Naive thymus-derived CD4-positive, alpha-beta T cell (primary cell): ENCODE measurements at regions of chr17 and their contacts with region 1.

Region 1: DNA sequence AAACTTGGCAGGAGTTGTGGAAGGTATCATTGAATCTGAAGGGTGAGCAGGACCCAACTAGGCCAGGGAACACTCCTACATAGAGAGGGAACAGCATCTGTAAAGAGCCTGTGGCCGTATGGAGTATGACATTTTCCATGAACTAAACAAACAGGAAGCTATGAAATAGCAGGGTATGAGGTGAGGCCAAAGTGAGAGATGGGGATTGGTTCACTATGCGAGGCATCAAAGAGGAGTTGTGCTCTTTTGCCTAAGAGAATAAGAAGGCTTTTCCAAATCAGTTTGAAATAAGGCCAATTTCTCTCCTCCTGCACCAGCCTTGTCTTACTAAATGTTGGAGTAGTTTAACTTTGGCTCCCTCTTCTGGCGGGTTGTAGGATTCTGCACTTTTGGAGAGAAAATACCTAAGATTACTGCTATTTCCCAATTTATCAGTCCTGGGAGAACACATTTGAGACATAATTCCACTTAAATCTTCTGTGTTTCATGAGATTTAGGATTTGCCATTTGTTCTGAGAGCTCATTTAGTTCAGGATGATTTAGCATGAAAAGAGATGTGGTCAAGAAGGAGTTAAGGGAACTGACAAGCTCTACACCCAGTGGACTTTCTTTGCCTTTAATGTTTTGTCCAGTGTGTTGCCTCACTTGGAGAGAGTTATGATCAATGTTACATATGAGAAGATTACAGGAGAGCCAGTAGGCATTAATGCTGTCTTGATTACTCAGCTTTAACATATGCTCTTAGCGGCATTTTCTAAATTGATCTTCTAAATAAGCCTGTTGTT is 55.4 kb downstream of the TNRC6C start:
- DNase-seq: peak in 7 of 9 donors; percentile 39 to 68 (median 61)
- ATAC-seq: peak; percentile 77
- H3K4me3 ChIP-seq: no peak overlapping the region
- H3K4me3 Mint-ChIP-seq: no peak overlapping the region
- H3K27ac ChIP-seq: no peak overlapping the region
- H3K27ac Mint-ChIP-seq: peak overlapping the region in 5 of 9 donors; percentile 3 to 64 (median 18)
- H3K4me1 ChIP-seq: peaks cover 0 to 3% of the 10 kb centered on the region in 2 donors
- H3K4me1 Mint-ChIP-seq: peaks cover 18 to 58% (median 43%) of the 10 kb centered on the region in 7 donors
- H3K27me3 ChIP-seq: no peaks in the 10 kb centered on the region
- H3K27me3 Mint-ChIP-seq: no peaks in the 10 kb centered on the region

Region 2: GRCh38 chr17:77645072-77646045 is 368.5 kb before region 1 on chr17:
- CTCF ChIA-PET with region 1: no interaction called
- POLR2A ChIA-PET with region 1: no interaction called
- intact Hi-C with region 1: loop called in 1 of 2 experiments (anchors 1 kb)
- DNase-seq: peak in 8 of 9 donors; percentile 45 to 74 (median 64)
- ATAC-seq: peak; percentile 84
- H3K4me3 ChIP-seq: peak overlapping the region; percentile 34
- H3K4me3 Mint-ChIP-seq: peak overlapping the region; percentile 63 to 81 (median 74)
- H3K27ac ChIP-seq: peak overlapping the region; percentile 55
- H3K27ac Mint-ChIP-seq: peak overlapping the region; percentile 84 to 94 (median 90)
- H3K4me1 ChIP-seq: peaks cover 13 to 21% of the 10 kb centered on the region in 2 donors
- H3K4me1 Mint-ChIP-seq: peaks cover 0 to 39% (median 31%) of the 10 kb centered on the region in 7 donors
- H3K27me3 ChIP-seq: no peaks in the 10 kb centered on the region
- H3K27me3 Mint-ChIP-seq: peaks cover 0 to 12% (median 0%) of the 10 kb centered on the region in 5 donors

Region 3: DNA sequence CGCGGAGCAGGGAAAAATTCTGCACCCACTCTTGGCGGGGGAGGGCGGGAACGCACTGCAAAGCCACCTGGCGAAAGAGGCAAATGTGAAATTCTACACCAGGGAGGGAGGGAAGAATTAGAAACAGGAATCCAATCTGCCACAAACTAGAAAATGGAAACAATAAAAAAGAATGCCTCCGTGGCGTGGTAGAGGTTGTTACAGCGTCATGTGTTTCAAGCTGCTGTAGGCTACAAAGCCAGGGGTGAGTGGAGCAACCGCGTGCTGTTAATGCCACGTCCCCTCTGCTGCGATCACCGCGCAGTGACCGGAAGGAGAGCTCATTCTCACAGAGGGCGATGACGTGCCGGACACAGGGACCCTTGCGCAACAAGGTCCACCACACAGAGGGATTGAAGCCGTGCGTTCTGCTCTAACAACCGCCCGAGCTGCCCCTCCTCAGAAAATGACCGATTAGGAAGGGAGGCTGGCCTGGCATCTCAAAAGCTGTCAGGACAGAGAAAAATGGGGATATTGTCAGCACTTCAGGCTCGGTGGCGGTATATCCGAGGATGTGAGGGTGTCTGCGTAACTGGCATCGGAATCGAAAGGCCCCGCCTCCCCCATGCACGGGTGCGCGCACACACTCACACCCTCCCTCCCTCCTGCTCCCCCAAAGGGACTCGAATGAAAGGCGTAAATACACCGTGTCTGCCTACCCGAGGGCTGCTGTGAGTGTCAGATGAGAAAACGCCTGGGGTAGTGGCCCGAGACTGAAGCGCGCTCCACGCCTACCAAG is 126.2 kb before region 1 on chr17:
- CTCF ChIA-PET with region 1: interaction called, 3 read pairs
- POLR2A ChIA-PET with region 1: interaction called, 4 read pairs
- intact Hi-C with region 1: loop called in 1 of 2 experiments (anchors 5 kb)
- DNase-seq: peak; percentile 55 to 92 (median 84)
- ATAC-seq: peak; percentile 95
- H3K4me3 ChIP-seq: peak overlapping the region; percentile 80
- H3K4me3 Mint-ChIP-seq: peak overlapping the region; percentile 84 to 97 (median 92)
- H3K27ac ChIP-seq: peak overlapping the region; percentile 92
- H3K27ac Mint-ChIP-seq: peak overlapping the region; percentile 65 to 99 (median 98)
- H3K4me1 ChIP-seq: peaks cover 31 to 37% of the 10 kb centered on the region in 2 donors
- H3K4me1 Mint-ChIP-seq: peaks cover 20 to 62% (median 52%) of the 10 kb centered on the region in 7 donors
- H3K27me3 ChIP-seq: no peaks in the 10 kb centered on the region
- H3K27me3 Mint-ChIP-seq: peaks cover 0 to 58% (median 0%) of the 10 kb centered on the region in 5 donors

Region 4: GRCh38 chr17:77963441-77963840 is 50.4 kb before region 1 on chr17:
- CTCF ChIA-PET with region 1: interaction called, 11 read pairs
- POLR2A ChIA-PET with region 1: interaction called, 75 read pairs
- intact Hi-C with region 1: loop called (anchors 1 to 2 kb)
- DNase-seq: peak in 7 of 9 donors; percentile 71 to 85 (median 83)
- ATAC-seq: peak; percentile 70
- H3K4me3 ChIP-seq: peak overlapping the region; percentile 34
- H3K4me3 Mint-ChIP-seq: peak overlapping the region in 9 of 10 donors; percentile 71 to 98 (median 86)
- H3K27ac ChIP-seq: peak overlapping the region; percentile 10
- H3K27ac Mint-ChIP-seq: peak overlapping the region in 8 of 9 donors; percentile 27 to 93 (median 80)
- H3K4me1 ChIP-seq: peaks cover 63 to 67% of the 10 kb centered on the region in 2 donors
- H3K4me1 Mint-ChIP-seq: peaks cover 39 to 84% (median 75%) of the 10 kb centered on the region in 7 donors
- H3K27me3 ChIP-seq: no peaks in the 10 kb centered on the region
- H3K27me3 Mint-ChIP-seq: peaks cover 0 to 4% (median 0%) of the 10 kb centered on the region in 5 donors